ENCODE measurements at regions of chr7 and their contacts with region 1.

Region 1: GRCh38 chr7:50287129-50287528 is 17.4 kb upstream of the IKZF1 start:
- DNase-seq: no peak
- CTCF ChIP-seq: no peak

Region 2: DNA sequence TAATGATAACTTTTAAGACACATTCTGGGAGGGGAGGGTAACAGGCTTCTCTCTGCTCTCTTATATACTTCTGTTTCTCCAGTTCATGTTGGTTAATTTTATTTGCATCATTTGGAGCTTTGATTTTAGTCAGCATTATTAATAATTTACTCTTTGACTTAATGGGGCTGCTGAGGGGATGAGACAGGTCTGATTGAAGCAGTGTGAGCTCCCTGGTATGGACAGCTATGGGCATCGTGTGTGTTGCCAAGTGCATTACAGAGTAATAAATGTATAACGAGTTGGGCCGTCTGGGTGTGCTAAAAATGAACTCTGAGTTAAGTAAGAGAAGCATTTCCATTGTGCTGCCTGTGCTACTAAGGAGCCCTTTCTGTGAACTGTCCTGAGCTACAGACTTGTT is 14.3 kb before region 1 on chr7:
- CTCF ChIA-PET with region 1: interaction called, 21 read pairs
- POLR2A ChIA-PET with region 1: interaction called, 5 read pairs
- DNase-seq: no peak
- CTCF ChIP-seq: no peak